ENCODE measurements at regions of chr1 and their contacts with region 1.

Region 1: DNA sequence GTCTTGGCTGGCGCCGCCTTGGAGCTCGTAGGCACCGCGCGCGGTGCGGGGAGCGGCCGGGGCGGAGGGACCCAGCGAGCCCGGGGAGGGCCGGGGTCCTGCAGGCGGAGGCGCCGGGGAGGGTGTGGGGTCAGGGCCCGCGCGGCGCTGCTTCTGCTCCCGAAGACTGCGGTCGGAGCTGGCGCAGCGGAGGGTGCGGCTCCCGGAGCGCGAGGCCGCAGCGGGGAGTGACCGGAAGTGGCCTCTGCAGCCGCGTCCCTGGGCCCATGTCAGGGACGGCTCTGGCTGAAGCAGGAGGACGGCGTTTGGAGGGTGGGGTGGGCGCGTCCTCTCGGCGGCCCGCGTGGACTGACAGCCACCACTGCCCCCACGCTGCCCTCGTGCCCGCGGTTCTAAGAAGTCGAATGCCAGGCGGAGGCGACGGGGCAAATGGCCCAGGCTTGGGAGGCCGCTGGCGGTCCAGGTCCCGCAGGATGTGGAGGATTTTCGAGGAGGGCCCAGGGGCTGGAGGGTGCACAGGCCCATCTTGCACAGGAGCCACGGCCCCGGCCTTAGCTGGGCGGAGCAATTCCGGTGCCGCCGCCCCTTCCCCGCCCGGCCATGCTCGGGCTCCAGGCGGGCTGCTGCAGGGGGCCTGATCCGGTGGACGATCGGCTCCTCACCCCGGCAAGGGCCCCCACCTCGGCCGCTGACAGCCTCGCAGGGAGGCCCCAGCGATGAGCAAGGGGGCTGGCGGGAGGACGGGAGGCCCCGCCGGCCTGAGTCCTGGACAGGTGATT is 7.7 kb upstream of the ZNF669 start:
- DNase-seq: peak; percentile 83 to 85 (median 84)
- ATAC-seq: peak; percentile 95
- H3K4me3 ChIP-seq: peak overlapping the region; percentile 68
- H3K27ac ChIP-seq: peak overlapping the region; percentile 82
- H3K4me1 ChIP-seq: peaks cover 4 to 34% of the 10 kb centered on the region in 2 experiments
- H3K27me3 ChIP-seq: no peaks in the 10 kb centered on the region
- CTCF ChIP-seq: no peak
- EP300 ChIP-seq: no peak
- POLR2A ChIP-seq: peak; percentile 68
- RAD21 ChIP-seq: no peak

Region 2: DNA sequence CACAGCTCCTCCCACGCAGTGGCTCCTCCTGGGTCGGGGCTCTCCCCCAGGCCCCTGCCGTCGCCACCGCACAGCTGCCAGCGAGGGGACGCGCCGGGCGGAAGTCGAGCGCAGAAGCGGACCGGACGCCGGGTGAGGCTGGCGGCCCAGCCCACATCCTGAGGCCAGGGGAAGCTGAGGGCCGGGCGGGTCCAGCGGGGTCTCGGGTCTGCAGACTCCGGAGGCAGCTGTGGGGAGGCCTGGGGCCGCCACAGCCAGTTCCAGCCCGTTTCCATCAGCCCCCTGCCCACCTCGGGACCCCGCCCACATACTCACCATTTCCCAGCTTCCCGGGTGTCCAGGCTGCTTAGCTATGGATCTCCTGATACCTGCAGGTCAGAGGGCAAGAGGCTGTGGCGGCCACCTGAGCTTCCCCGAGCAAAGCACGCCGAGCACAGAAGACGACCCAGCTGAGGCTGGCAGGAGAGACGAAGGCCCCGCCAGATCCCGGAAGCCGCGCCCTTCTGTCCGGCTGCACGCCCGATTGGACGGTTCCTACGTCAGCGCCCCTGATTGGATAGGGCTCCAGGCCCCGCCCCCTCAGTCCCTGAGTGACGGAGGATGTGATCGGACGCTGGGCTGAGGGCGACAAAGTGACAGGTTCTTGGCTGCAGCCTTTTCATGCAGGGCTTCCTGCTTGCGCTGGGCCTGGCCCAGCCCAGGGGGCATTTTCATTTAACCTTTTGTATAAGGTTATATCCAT is 98.7 kb after region 1 on chr1:
- CTCF ChIA-PET with region 1: no interaction called
- POLR2A ChIA-PET with region 1: no interaction called
- in situ Hi-C with region 1: no loop called
- intact Hi-C with region 1: loop called (anchors 5 kb)
- DNase-seq: peak; percentile 99 to 100 (median 99)
- ATAC-seq: peak; percentile 99
- H3K4me3 ChIP-seq: peak overlapping the region; percentile 66
- H3K27ac ChIP-seq: peak overlapping the region; percentile 80
- H3K4me1 ChIP-seq: peaks cover 16 to 24% of the 10 kb centered on the region in 2 experiments
- H3K27me3 ChIP-seq: no peaks in the 10 kb centered on the region
- CTCF ChIP-seq: no peak
- EP300 ChIP-seq: no peak
- POLR2A ChIP-seq: peak; percentile 96
- RAD21 ChIP-seq: peak in 1 of 2 experiments; percentile 8; a peak in 1 of 4 replicates